PC-9 (cell line): ENCODE measurements at regions of chr17 and their contacts with region 1.

Region 1: GRCh38 chr17:70804161-70804560 is 634.8 kb downstream of the KCNJ2 start:
- DNase-seq: no peak
- H3K4me3 ChIP-seq: no peak overlapping the region
- H3K27ac ChIP-seq: no peak overlapping the region
- H3K4me1 ChIP-seq: no peaks in the 10 kb centered on the region
- H3K27me3 ChIP-seq: no peaks in the 10 kb centered on the region
- CTCF ChIP-seq: no peak

Region 2: DNA sequence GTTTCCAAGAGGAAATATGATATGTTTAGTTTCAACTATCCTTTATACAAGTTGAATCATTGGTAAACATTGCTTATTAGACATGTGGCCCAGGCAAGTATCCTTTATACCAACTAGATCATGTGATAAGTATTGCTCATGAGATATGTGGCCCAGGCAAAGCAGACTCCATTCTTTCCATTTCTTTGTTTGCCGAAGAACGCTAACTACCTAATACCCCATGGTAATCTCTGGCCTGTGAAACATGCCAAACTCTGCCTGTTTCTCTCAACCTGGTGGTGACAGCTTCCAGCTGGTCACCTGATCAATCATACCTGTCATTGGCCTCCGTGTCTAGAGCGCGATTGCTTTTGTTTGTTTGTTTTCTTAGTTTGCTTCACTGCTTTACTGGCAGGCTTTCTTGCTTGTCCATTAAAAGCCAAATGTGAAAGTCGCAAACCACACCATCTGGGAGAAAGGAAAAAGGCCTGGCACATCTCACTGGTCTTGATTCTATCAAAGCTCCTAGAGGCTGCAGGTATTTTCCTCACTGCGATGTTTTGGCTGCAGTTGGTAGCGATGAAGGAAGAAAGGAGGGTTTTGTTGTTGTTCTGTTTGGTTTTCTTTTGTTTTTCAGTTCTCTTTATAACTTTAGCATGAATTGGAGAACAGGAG is 51.4 kb after region 1 on chr17:
- CTCF ChIA-PET with region 1: no interaction called
- POLR2A ChIA-PET with region 1: interaction called, 12 read pairs
- intact Hi-C with region 1: no loop called
- DNase-seq: peak in 1 of 2 experiments; percentile 5
- H3K4me3 ChIP-seq: no peak overlapping the region
- H3K27ac ChIP-seq: no peak overlapping the region
- H3K4me1 ChIP-seq: no peaks in the 10 kb centered on the region
- H3K27me3 ChIP-seq: no peaks in the 10 kb centered on the region
- CTCF ChIP-seq: no peak